Pancreas (tissue), 10 donors: ENCODE measurements at regions of chr1 and their contacts with region 1.

Region 1: GRCh38 chr1:231369282-231369681 is 31.2 kb downstream of the SPRTN start:
- DNase-seq: no peak
- ATAC-seq: no peak
- H3K4me3 ChIP-seq: no peak overlapping the region
- H3K27ac ChIP-seq: no peak overlapping the region
- H3K4me1 ChIP-seq: no peaks in the 10 kb centered on the region
- H3K27me3 ChIP-seq: no peaks in the 10 kb centered on the region
- CTCF ChIP-seq: no peak

Region 2: GRCh38 chr1:231419738-231420298 is 50.5 kb after region 1 on chr1:
- intact Hi-C with region 1: loop called in 1 of 3 experiments (anchors 10 kb)
- DNase-seq: no peak
- ATAC-seq: no peak
- H3K4me3 ChIP-seq: peak overlapping the region; percentile 74 to 84 (median 78)
- H3K27ac ChIP-seq: peak overlapping the region; percentile 93 to 99 (median 97)
- H3K4me1 ChIP-seq: peaks cover 9 to 47% (median 44%) of the 10 kb centered on the region in 3 donors
- H3K27me3 ChIP-seq: no peaks in the 10 kb centered on the region
- CTCF ChIP-seq: no peak

Region 3: GRCh38 chr1:231512147-231512698 is 142.9 kb after region 1 on chr1:
- intact Hi-C with region 1: no loop called
- DNase-seq: no peak
- ATAC-seq: no peak
- H3K4me3 ChIP-seq: no peak overlapping the region
- H3K27ac ChIP-seq: no peak overlapping the region
- H3K4me1 ChIP-seq: no peaks in the 10 kb centered on the region
- H3K27me3 ChIP-seq: no peaks in the 10 kb centered on the region
- CTCF ChIP-seq: no peak